Gastrocnemius medialis (tissue), 4 donors: ENCODE measurements at regions of chr3 and their contacts with region 1.

Region 1: GRCh38 chr3:187738331-187739093 is 6.8 kb downstream of the BCL6 start:
- DNase-seq: peak; percentile 92 to 93
- ATAC-seq: peak; percentile 34 to 37
- H3K4me3 ChIP-seq: peak overlapping the region; percentile 70 to 94 (median 88)
- H3K27ac ChIP-seq: peak overlapping the region; percentile 95 to 100 (median 98)
- H3K4me1 ChIP-seq: peaks cover 40% of the 10 kb centered on the region in 2 donors
- H3K27me3 ChIP-seq: no peaks in the 10 kb centered on the region
- CTCF ChIP-seq: peak; percentile 66 to 82 (median 72)
- POLR2A ChIP-seq: peak; percentile 54 to 64

Region 2: GRCh38 chr3:187361835-187362234 is 376.7 kb before region 1 on chr3:
- in situ Hi-C with region 1: no loop called
- intact Hi-C with region 1: no loop called
- DNase-seq: no peak
- ATAC-seq: no peak
- H3K4me3 ChIP-seq: no peak overlapping the region
- H3K27ac ChIP-seq: no peak overlapping the region
- H3K4me1 ChIP-seq: no peaks in the 10 kb centered on the region
- H3K27me3 ChIP-seq: no peaks in the 10 kb centered on the region
- CTCF ChIP-seq: no peak
- POLR2A ChIP-seq: no peak

Region 3: DNA sequence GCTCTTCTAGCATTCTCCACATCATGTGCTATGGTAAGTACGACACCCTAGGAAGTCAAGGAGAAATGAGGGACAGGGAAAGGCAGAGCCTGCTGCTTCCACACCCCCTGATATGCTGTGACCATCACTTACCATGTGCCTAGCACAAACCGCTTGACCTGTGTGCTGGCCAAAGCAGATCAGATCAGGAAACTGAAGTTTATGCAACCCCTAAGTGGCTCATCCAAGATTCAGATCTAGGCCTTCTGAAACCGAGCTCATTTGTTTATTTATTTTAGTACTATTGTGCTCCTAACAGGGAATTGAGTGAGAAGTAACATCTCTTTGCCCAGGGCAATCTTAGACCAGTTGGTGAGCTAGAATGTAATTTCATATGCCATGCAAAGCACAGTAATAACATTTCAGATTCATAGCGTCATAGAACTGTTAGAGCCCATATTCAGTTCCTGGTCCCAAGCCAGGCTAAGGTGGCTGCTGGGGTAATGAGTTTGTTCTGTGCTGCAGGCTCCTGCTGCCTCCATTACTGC is 35.9 kb before region 1 on chr3 and contains the start of gene RTP2:
- in situ Hi-C with region 1: no loop called
- intact Hi-C with region 1: no loop called
- DNase-seq: peak in 1 of 2 donors; percentile 61
- ATAC-seq: peak; percentile 53 to 77
- H3K4me3 ChIP-seq: no peak within 1 kb of the TSS
- H3K27ac ChIP-seq: peak within 1 kb of the TSS; percentile 76 to 90 (median 80)
- H3K4me1 ChIP-seq: peaks cover 43 to 59% of the 10 kb centered on the region in 2 donors
- H3K27me3 ChIP-seq: no peaks in the 10 kb centered on the region
- CTCF ChIP-seq: no peak
- POLR2A ChIP-seq: no peak
- total RNA-seq, gene RTP2: 1.9 to 3.1 (median 2.3) TPM in 3 of 4 donors, not detected in the other

Region 4: DNA sequence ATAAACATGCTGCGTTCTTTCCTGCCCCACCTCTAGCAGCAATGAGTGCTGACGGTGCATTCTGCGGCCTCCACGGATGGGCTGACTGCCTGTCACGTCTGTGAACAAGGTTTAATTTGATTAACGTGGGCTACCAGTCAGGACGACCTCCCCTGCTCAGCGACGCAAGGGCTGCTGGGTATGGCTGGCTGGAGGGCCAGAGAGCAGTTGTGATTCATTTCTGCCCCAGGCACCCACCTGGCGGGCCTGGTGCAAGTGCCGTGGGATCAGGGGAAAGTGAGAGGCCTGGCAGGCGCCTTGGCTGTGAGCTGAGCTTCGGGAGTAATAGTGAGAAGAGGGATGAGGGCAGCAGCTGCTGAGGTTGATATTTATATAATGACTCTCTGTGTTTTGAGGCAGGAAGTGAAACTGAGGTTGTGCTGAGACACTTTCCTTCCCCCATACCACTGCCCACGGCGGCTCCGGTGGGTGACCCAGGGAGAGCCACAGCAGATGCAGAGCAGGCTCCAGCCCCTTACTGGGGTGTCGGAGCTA is 197.2 kb after region 1 on chr3:
- in situ Hi-C with region 1: no loop called
- intact Hi-C with region 1: no loop called
- DNase-seq: peak; percentile 64 to 88
- ATAC-seq: peak; percentile 34 to 88
- H3K4me3 ChIP-seq: peak overlapping the region in 1 of 4 donors; percentile 6
- H3K27ac ChIP-seq: peak overlapping the region; percentile 79 to 88 (median 86)
- H3K4me1 ChIP-seq: peaks cover 11 to 44% of the 10 kb centered on the region in 2 donors
- H3K27me3 ChIP-seq: no peaks in the 10 kb centered on the region
- CTCF ChIP-seq: no peak
- POLR2A ChIP-seq: no peak

Region 5: GRCh38 chr3:188154014-188154808 is 415.7 kb after region 1 on chr3 and contains the start of gene LPP:
- in situ Hi-C with region 1: loop called in 1 of 4 experiments (anchors 10 kb)
- intact Hi-C with region 1: loop called (anchors 2 kb)
- DNase-seq: peak; percentile 53 to 76
- ATAC-seq: peak; percentile 60 to 70
- H3K4me3 ChIP-seq: peak within 1 kb of the TSS; percentile 61 to 96 (median 83)
- H3K27ac ChIP-seq: peak within 1 kb of the TSS; percentile 93 to 98 (median 98)
- H3K4me1 ChIP-seq: peaks cover 44 to 54% of the 10 kb centered on the region in 2 donors
- H3K27me3 ChIP-seq: no peaks in the 10 kb centered on the region
- CTCF ChIP-seq: no peak
- POLR2A ChIP-seq: peak; percentile 78 to 80
- total RNA-seq, gene LPP: 56.0 to 65.7 (median 58.1) TPM

Region 6: GRCh38 chr3:188262913-188263683 is 524.6 kb after region 1 on chr3:
- in situ Hi-C with region 1: loop called in 1 of 4 experiments (anchors 10 kb)
- intact Hi-C with region 1: loop called (anchors 1 kb)
- DNase-seq: peak; percentile 49 to 54
- ATAC-seq: peak; percentile 8 to 17
- H3K4me3 ChIP-seq: no peak overlapping the region
- H3K27ac ChIP-seq: peak overlapping the region; percentile 94 to 99 (median 96)
- H3K4me1 ChIP-seq: peaks cover 83 to 92% of the 10 kb centered on the region in 2 donors
- H3K27me3 ChIP-seq: no peaks in the 10 kb centered on the region
- CTCF ChIP-seq: no peak
- POLR2A ChIP-seq: peak in 1 of 2 donors; percentile 68

Region 7: DNA sequence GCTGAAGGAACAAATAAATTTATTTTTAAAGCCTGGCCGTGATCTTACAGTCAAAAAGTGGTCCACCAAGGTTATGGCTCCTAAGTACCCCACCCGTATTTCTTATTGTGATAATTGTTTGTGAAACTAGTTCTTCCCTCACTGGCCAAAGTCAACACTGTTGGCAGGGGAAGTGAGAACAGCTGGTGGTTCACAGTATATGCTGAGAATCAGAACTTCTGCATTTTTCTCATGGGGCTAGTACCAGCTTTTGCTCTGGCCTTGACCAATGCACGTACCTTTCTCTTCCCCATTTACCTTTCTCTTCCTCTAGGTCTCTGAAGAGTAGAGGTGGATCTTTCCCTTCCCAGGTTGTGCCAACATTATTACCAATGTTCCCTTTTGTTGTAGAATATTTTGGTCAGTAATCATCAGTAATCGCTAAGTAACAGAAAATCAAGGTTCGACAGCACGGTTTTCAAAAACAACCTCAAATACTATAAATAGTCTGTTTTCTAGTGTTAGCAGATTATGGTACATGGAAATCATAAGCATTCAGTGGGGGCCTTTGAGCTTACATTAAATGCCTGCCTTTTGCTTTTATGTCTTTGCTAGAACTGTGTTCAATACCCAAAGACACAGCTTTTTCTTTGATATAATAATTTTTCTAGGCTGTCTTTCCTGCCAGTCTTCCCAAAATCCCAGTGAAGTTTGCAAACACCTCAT is 683.5 kb after region 1 on chr3:
- in situ Hi-C with region 1: loop called in 2 of 4 experiments (anchors 25 kb)
- intact Hi-C with region 1: loop called (anchors 5 kb)
- DNase-seq: no peak
- ATAC-seq: no peak
- H3K4me3 ChIP-seq: no peak overlapping the region
- H3K27ac ChIP-seq: peak overlapping the region; percentile 31 to 50 (median 47)
- H3K4me1 ChIP-seq: peaks cover 21% of the 10 kb centered on the region in 2 donors
- H3K27me3 ChIP-seq: no peaks in the 10 kb centered on the region
- CTCF ChIP-seq: no peak
- POLR2A ChIP-seq: no peak

Region 8: DNA sequence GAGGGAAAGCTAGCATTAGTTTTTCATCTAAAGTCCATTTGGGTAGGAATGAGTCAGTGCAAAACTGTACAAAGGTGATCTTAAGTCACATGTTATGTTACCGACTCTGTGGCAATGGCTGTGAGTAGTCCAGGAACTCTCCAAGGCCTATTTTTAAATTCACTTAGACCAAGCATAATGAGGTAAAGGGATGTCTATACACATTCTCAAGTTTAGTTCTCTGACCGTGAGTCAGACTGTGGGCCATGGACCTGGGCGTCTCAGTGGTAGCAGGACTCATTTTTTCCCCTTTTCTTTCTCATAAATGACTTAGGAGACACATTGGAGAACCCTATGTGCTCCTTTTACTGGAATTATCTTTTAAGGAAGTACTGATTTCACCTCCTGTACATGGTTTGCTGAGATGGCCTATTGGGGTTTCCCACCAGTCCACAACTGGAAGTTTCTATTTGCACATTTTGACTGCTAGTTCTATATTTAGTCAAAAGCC is 944.6 kb after region 1 on chr3:
- in situ Hi-C with region 1: loop called in 1 of 4 experiments (anchors 25 kb)
- intact Hi-C with region 1: loop called (anchors 5 kb)
- DNase-seq: peak; percentile 61 to 73
- ATAC-seq: peak; percentile 99 to 100
- H3K4me3 ChIP-seq: no peak overlapping the region
- H3K27ac ChIP-seq: peak overlapping the region; percentile 73 to 90 (median 78)
- H3K4me1 ChIP-seq: peaks cover 40 to 44% of the 10 kb centered on the region in 2 donors
- H3K27me3 ChIP-seq: no peaks in the 10 kb centered on the region
- CTCF ChIP-seq: no peak
- POLR2A ChIP-seq: peak; percentile 32 to 73